ENCODE measurements at regions of chr3 and their contacts with region 1.

Region 1: GRCh38 chr3:51498876-51499738 is 708 bp downstream of the DCAF1 start:
- DNase-seq: peak; percentile 86 to 98
- H3K4me3 ChIP-seq: peak overlapping the region; percentile 88 to 95
- H3K27ac ChIP-seq: peak overlapping the region; percentile 98 to 99
- H3K4me1 ChIP-seq: peaks cover 0 to 3% of the 10 kb centered on the region in 2 donors
- H3K27me3 ChIP-seq: no peaks in the 10 kb centered on the region
- CTCF ChIP-seq: no peak

Region 2: GRCh38 chr3:50568947-50569749 is 930.0 kb before region 1 on chr3 and contains the start of gene HEMK1:
- intact Hi-C with region 1: loop called (anchors 2 kb)
- DNase-seq: peak; percentile 90 to 99
- H3K4me3 ChIP-seq: peak within 1 kb of the TSS; percentile 74 to 89
- H3K27ac ChIP-seq: peak within 1 kb of the TSS; percentile 75 to 85
- H3K4me1 ChIP-seq: peaks cover 0 to 19% of the 10 kb centered on the region in 2 donors
- H3K27me3 ChIP-seq: no peaks in the 10 kb centered on the region
- CTCF ChIP-seq: no peak
- total RNA-seq, gene HEMK1: 13.1 TPM

Region 3: DNA sequence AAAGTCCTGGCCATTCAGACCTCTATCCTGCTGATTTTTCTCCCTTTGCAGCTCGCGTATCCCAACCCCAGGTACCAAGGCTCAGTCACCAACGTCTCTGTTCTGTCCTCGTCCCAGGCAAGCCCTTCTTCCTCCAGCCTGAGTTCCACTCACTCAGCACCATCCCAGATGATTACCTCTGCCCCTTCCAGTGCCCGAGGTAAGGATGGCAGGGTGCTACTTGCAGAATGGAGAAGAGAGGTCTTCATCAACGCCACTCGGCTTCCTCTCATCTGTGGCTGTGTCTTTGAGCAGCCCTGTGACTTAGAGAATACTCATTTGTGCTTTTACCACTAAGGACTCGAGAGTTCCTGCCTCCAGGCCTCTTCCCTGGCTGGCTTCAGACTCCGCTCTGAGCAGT is 136.6 kb before region 1 on chr3:
- intact Hi-C with region 1: no loop called
- DNase-seq: no peak
- H3K4me3 ChIP-seq: no peak overlapping the region
- H3K27ac ChIP-seq: no peak overlapping the region
- H3K4me1 ChIP-seq: no peaks in the 10 kb centered on the region
- H3K27me3 ChIP-seq: no peaks in the 10 kb centered on the region
- CTCF ChIP-seq: no peak

Region 4: GRCh38 chr3:51391075-51391567 is 108.0 kb before region 1 on chr3 and contains the start of gene RBM15B:
- intact Hi-C with region 1: loop called (anchors 1 kb)
- DNase-seq: peak; percentile 88 to 98
- H3K4me3 ChIP-seq: peak within 1 kb of the TSS; percentile 86 to 90
- H3K27ac ChIP-seq: peak within 1 kb of the TSS; percentile 81 to 89
- H3K4me1 ChIP-seq: peaks cover 18 to 58% of the 10 kb centered on the region in 2 donors
- H3K27me3 ChIP-seq: no peaks in the 10 kb centered on the region
- CTCF ChIP-seq: peak; percentile 88 to 90 (median 88)
- total RNA-seq, gene RBM15B: 33.0 TPM

Region 5: GRCh38 chr3:51670823-51671733 is 172.0 kb after region 1 on chr3 and contains the start of gene TEX264:
- intact Hi-C with region 1: loop called (anchors 1 kb)
- DNase-seq: peak; percentile 56 to 94
- H3K4me3 ChIP-seq: peak within 1 kb of the TSS; percentile 88 to 91
- H3K27ac ChIP-seq: peak within 1 kb of the TSS; percentile 83 to 89
- H3K4me1 ChIP-seq: peaks cover 5 to 14% of the 10 kb centered on the region in 2 donors
- H3K27me3 ChIP-seq: no peaks in the 10 kb centered on the region
- CTCF ChIP-seq: no peak
- total RNA-seq, gene TEX264: 69.1 TPM

Region 6: DNA sequence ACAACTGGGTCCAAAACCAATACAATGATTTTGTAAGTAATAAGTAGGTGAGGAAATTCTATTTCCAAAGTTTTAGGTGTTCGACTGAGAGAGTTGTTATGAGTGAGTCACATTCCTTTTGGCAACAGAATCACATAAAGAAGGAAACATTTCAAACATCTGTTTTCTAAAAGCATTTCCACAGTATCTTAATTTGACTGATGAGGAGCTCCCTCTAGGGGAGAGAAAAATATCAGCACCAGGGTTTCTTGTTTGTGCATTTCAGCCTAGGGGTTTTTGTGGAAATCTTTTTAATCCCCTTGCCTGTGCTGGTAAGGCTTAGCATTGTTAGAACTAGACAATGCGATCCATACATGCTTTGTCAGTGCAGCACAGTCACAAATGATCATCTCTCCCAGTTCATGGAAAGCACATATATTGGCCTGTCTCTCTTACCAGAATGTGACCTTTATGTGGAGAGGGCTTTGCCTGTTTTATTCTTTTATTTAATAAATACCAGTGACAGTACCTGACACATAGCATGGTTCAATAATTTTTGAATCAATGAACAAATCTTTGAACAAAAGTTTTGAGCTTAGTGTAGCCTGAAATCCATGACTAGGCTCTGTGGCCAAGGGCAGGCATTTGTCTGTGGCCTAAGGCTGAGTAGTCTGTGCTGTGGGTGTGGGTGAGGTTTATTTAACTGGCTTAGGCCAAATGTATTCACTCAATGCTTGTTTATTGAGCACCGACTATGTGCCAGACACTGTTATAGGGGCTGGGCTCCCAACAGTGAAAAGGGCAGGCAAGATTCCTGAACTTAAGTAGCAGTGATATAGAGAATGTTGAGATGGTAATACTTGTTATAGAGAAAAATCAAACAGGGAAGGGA is 301.0 kb after region 1 on chr3:
- intact Hi-C with region 1: loop called (anchors 2 kb)
- DNase-seq: no peak
- H3K4me3 ChIP-seq: no peak overlapping the region
- H3K27ac ChIP-seq: no peak overlapping the region
- H3K4me1 ChIP-seq: no peaks in the 10 kb centered on the region
- H3K27me3 ChIP-seq: no peaks in the 10 kb centered on the region
- CTCF ChIP-seq: peak; percentile 54 to 73 (median 57)

Measured in ascending aorta (tissue), 2 donors.